PC-3 (cell line): ENCODE measurements at regions of chr10 and their contacts with region 1.

Region 1: DNA sequence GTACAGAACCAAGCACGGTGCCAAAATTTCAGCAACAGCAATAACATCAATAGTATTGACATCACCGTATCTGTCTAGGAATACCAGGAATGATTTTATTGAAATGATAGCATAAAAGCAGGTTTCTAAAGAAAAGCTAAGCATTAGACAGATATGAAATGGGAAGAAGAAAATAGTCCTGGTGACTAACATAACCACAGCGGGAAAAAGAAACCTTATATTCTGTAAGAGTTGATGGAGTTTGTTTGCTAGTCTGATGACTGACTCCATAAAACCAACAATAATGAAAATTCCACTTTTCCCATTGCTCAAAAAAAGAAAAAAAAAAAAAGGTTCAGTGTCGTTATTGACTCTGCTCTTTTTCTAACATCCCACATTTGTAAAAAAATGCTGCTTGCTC is 668.3 kb downstream of the IPMK start:
- DNase-seq: peak; percentile 79
- ATAC-seq: peak; percentile 99
- H3K4me3 ChIP-seq: no peak overlapping the region
- H3K27ac ChIP-seq: peak overlapping the region; percentile 45
- H3K4me1 ChIP-seq: peaks cover 12% of the 10 kb centered on the region
- H3K27me3 ChIP-seq: peaks cover 6% of the 10 kb centered on the region; the same call in 1 of the 2 replicates
- CTCF ChIP-seq: no peak

Region 2: DNA sequence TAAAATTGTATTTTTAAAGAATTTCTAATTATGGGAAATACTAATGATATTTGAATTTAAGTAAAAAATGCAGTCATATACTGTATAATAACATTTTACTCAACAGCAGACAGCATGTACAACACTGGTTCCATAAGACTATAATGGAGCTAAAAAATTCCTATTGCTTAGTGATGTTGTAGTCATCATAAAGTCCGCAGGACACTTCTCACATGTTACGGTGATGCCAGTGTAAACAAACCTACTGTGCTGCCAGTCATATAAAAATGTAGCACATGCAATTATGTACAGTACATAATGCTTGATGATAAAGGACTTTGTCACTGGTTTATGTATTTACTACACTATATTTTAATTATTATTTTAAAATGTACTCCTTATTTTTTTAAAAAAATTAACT is 39.0 kb after region 1 on chr10:
- CTCF ChIA-PET with region 1: no interaction called
- POLR2A ChIA-PET with region 1: no interaction called
- intact Hi-C with region 1: loop called (anchors 5 kb)
- DNase-seq: peak; percentile 77
- ATAC-seq: peak; percentile 100
- H3K4me3 ChIP-seq: no peak overlapping the region
- H3K27ac ChIP-seq: no peak overlapping the region
- H3K4me1 ChIP-seq: no peaks in the 10 kb centered on the region
- H3K27me3 ChIP-seq: no peaks in the 10 kb centered on the region
- CTCF ChIP-seq: no peak

Region 3: DNA sequence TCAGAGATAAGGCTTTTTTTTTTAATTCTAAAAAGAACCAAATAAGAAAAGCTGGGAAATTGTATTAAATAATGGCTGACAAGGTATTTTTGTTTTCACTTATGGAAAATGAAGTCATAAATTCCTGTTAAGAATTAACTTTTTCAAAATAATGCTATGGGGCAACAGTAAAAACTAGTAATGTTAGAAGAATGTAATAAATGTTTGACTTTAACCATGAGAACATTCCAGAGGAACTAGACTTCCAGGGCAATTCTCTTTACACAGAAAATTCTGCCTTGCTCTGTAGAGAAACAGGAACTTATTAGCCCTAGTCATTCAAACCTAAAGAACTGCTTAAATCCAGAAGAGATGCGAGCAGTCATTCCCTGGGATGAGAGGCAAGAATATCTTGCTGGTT is 97.2 kb after region 1 on chr10:
- CTCF ChIA-PET with region 1: no interaction called
- POLR2A ChIA-PET with region 1: no interaction called
- intact Hi-C with region 1: loop called (anchors 5 kb)
- DNase-seq: peak; percentile 94
- ATAC-seq: peak; percentile 96
- H3K4me3 ChIP-seq: no peak overlapping the region
- H3K27ac ChIP-seq: peak overlapping the region; percentile 63
- H3K4me1 ChIP-seq: peaks cover 35% of the 10 kb centered on the region
- H3K27me3 ChIP-seq: no peaks in the 10 kb centered on the region
- CTCF ChIP-seq: no peak